ENCODE measurements at regions of chr12 and their contacts with region 1.

Region 1: DNA sequence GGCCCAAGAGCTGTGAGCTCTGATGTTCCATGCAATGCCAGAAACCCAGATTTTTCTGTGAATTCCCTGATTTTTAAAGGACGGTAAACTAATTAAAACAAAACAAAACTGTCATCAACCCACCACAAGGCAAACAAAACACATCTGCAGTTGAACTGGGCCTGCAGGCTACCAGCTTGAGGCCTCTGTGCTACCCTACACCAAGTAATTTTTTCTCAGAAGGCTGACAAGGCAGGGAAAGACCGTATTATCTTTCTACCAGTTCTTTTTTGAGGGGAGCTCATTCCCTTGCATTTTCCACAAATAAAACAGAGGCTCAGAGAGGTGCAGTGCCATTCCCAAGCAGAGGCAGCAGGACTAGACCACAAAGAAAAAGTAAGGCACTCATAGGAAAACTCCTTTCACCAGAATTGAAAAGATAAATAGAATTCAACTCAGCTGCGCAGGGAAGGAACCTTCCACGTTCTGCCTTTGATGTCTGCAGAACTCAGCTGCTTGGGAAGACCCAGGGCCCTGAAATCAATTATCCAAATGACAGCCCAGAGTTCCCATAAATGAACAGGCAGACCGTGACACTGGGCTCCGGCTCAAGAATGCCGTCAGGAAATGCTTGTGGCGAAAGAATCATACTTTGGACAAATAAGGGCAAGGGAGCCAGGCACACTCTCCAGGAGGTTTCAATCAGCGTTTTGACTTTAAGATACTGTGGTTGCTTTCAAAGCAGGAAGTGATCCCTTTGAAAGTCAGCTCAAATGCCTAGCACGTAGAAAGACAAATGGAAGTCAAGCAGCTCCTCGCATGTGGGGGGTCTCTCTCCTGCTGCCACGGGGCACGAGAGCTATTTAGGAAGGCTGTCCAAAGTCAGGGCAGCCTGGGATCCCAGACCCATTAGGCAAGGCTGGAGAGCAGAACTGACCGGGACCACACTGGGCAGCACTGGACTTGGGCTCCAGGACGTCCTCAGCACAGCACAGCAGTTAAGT is 14.1 kb downstream of the KCTD10 start:
- DNase-seq: peak; percentile 92
- H3K4me3 ChIP-seq: no peak overlapping the region
- H3K27ac ChIP-seq: peak overlapping the region; percentile 89
- H3K4me1 ChIP-seq: peaks cover 71% of the 10 kb centered on the region
- H3K27me3 ChIP-seq: no peaks in the 10 kb centered on the region
- CTCF ChIP-seq: no peak
- POLR2A ChIP-seq: peak; percentile 23

Region 2: DNA sequence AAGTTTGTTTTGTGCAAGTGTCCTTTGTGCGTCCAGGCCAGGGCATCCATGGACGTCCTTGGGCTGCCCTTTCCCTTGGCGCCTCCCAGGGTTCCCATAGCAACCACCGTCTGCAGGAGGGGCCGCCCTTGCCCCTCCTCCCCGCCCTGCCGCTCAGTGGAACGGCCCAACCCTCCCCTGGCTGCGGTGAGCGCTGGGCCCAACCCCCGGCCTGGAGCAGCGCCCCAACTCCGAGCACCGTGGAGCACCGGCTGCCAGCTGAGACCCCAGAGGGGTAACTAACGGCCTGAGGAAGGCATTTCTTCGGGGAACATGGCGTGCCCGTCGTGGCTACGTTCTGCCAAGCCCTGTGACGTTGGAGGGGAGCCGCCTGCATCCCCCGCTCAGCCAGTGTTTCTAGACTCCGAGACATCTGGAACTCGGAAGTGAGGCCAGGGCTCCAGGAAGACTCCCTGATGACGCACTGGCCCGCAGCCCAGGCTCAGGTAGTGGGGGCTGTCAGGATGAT is 352.0 kb before region 1 on chr12:
- CTCF ChIA-PET with region 1: no interaction called
- POLR2A ChIA-PET with region 1: no interaction called
- dilution Hi-C with region 1: no loop called
- intact Hi-C with region 1: no loop called
- DNase-seq: peak; percentile 84
- H3K4me3 ChIP-seq: peak overlapping the region; percentile 31 to 56 (median 38)
- H3K27ac ChIP-seq: peak overlapping the region; percentile 80
- H3K4me1 ChIP-seq: peaks cover 12% of the 10 kb centered on the region
- H3K27me3 ChIP-seq: no peaks in the 10 kb centered on the region
- CTCF ChIP-seq: no peak
- POLR2A ChIP-seq: peak; percentile 37

Region 3: DNA sequence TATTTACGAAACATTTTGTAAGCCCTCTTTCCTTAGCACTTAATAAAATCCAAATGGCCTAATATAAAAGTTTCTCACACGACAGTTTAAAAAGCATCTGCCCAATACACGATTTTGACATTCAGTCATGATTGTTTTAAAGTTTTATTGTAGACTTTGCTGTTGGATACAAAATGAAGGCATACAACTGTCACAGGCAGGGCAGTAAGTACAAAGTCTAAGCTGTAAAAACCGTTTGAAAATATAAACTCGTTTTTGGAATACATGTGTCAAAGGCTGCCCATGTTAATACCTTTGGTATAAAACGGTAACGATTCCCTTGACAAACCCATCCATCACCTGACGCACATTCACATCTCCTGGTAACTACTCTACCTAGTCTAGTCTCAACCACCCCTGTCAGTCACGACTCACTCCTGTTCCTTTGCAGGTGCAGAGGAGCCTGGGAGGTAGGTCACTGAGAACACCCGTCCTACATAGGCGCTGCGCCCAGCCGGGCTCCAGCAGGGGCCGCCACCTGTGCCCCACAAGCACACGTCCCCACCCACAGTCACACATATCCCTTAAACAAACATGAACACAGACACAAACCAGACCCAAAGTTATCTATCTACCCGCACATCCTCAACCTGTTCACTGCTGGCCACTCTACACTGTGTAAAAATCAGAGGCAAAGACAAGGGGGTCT is 13.0 kb before region 1 on chr12:
- CTCF ChIA-PET with region 1: interaction called, 10 read pairs
- POLR2A ChIA-PET with region 1: no interaction called
- dilution Hi-C with region 1: no loop called
- intact Hi-C with region 1: loop called (anchors 1 kb)
- DNase-seq: no peak
- H3K4me3 ChIP-seq: no peak overlapping the region
- H3K27ac ChIP-seq: no peak overlapping the region
- H3K4me1 ChIP-seq: peaks cover 14% of the 10 kb centered on the region
- H3K27me3 ChIP-seq: no peaks in the 10 kb centered on the region
- CTCF ChIP-seq: no peak
- POLR2A ChIP-seq: no peak

Region 4: DNA sequence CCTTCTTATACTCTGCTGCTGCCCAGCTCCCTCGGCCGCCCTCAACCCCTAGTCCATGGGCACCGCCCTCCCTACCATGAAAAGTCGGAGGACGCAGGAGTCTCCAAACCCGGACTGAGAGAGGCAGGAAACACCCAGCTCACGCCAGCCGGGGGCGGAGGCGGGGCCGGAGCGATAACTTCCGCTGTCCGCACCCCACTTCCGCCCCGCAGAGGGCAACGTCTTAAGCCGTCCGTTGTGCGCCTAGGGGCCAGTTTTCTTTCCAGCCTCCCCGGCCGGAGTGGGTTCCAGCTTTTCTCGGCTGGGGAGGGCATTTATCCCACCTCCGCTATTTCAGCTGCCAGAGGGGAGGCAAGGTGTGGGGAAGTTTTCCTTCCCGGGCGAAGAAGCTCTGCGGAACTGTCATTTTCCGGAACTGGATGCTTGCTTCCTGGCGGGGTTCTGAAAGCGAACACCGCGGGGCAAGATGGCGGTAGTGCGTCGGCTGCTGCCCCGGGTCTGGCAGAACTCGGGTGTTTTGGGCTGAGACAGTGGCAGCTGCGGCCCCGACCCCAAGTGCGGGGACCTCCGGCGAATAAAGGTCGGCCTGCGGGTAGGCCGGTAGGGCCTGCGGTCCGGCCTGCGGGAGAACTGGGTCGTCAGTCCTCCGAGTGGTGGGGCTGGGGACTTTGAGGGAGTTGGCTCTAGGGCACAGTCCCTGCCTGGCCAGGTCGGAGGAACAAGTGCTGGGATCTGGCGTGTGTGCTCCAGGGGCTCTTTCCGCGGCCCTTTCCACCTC is 14.4 kb after region 1 on chr12 and contains the starts of genes KCTD10 and UBE3B:
- CTCF ChIA-PET with region 1: interaction called, 12 read pairs
- POLR2A ChIA-PET with region 1: interaction called, 11 read pairs
- dilution Hi-C with region 1: no loop called
- intact Hi-C with region 1: loop called (anchors 1 kb)
- DNase-seq: peak; percentile 86
- H3K4me3 ChIP-seq: peak within 1 kb of the TSS; percentile 91 to 97 (median 92)
- H3K27ac ChIP-seq: peak within 1 kb of the TSS; percentile 98
- H3K4me1 ChIP-seq: peaks cover 19% of the 10 kb centered on the region
- H3K27me3 ChIP-seq: no peaks in the 10 kb centered on the region
- CTCF ChIP-seq: no peak
- POLR2A ChIP-seq: peak; percentile 79
- total RNA-seq, gene KCTD10: 92.8 and 101 TPM in 2 replicates
- total RNA-seq, gene UBE3B: 32.7 and 40.8 TPM in 2 replicates

Measured in endothelial cell of umbilical vein (primary cell).